H1 (cell line): ENCODE measurements at regions of chr14 and their contacts with region 1.

Region 1: DNA sequence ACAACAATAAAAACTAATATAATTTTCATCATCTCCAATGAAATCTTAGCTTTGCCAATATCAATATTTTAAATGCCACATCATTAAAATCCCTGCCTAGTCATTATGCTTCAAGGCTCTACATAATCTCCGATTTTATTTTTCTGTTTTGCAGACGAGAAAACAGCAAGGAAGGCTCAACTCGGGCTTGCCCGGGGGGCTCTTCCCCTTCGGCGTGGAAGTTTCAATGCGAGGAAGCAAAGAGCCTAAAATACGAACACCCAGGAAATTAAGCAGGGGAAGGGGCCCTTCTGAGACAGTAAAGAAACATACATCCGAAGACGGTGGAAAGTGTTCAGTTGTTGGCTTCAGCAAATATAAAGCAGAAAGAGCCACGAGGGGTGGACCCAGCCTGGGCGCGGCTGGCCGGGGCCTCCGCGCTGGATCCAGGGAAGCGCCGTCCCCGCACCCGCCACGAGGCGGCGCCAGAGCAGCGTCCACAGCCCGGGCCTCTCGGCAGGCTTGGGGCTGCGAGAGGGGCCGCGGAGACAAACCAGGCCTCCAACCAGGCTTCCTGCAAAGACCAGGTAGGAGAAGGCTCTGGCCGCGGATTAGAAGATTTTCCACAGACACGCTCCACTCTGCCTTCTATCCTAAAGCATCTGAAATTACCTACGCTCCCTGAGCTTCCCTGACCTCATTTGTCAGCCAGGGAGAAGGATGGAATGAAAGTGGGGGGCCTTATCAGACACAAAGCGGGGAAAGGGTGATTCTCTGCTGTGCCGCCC is 77.2 kb downstream of the SERPINA3 start:
- DNase-seq: peak in 1 of 2 experiments; percentile 92
- H3K4me3 ChIP-seq: peak overlapping the region in 1 of 4 experiments; percentile 48; a peak in 3 of 8 replicates
- H3K27ac ChIP-seq: no peak overlapping the region
- H3K4me1 ChIP-seq: peaks cover 0 to 7% (median 4%) of the 10 kb centered on the region in 4 experiments; a peak in 5 of 7 replicates
- H3K27me3 ChIP-seq: peaks cover 0 to 8% (median 4%) of the 10 kb centered on the region in 4 experiments; a peak in 5 of 7 replicates
- CTCF ChIP-seq: peak; percentile 83 to 94 (median 93)
- EP300 ChIP-seq: no peak
- POLR2A ChIP-seq: no peak
- RAD21 ChIP-seq: peak; percentile 96

Region 2: DNA sequence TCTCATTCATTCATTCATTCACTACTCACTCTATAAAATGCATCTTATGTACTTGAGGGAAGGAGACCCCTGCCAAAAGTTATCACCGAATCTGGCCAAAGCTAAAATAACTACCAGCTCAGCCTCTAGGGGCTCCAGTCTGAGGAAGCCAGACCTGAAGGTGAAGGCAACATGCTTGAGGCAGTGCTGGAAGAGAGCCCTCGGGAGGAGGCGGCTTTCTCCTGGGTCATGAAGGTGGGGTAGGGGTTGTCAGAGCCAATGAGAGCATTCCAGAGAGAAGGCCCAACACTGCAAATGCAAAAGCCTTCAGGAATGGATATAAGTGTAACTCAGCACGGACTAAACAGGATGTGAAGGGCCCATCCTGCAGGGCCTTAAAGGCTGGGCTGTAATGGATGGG is 18.1 kb after region 1 on chr14:
- CTCF ChIA-PET with region 1: interaction called, 23 read pairs
- POLR2A ChIA-PET with region 1: no interaction called
- DNase-seq: peak in 1 of 2 experiments; percentile 54
- H3K4me3 ChIP-seq: no peak overlapping the region
- H3K27ac ChIP-seq: no peak overlapping the region
- H3K4me1 ChIP-seq: no peaks in the 10 kb centered on the region
- H3K27me3 ChIP-seq: no peaks in the 10 kb centered on the region
- CTCF ChIP-seq: peak; percentile 35 to 70 (median 46); a peak in 3 of 4 replicates
- EP300 ChIP-seq: no peak
- POLR2A ChIP-seq: no peak
- RAD21 ChIP-seq: peak; percentile 45 to 51

Region 3: GRCh38 chr14:94738751-94739150 is 49.4 kb after region 1 on chr14:
- CTCF ChIA-PET with region 1: no interaction called
- POLR2A ChIA-PET with region 1: no interaction called
- DNase-seq: no peak
- H3K4me3 ChIP-seq: no peak overlapping the region
- H3K27ac ChIP-seq: no peak overlapping the region
- H3K4me1 ChIP-seq: no peaks in the 10 kb centered on the region
- H3K27me3 ChIP-seq: no peaks in the 10 kb centered on the region
- CTCF ChIP-seq: no peak
- EP300 ChIP-seq: no peak
- POLR2A ChIP-seq: no peak
- RAD21 ChIP-seq: no peak